ENCODE measurements at regions of chr11 and their contacts with region 1.

Region 1: GRCh38 chr11:126310228-126310991 is 6.5 kb downstream of the DCPS start:
- DNase-seq: no peak
- H3K4me3 ChIP-seq: no peak overlapping the region
- H3K27ac ChIP-seq: no peak overlapping the region
- H3K4me1 ChIP-seq: peaks cover 0 to 34% (median 3%) of the 10 kb centered on the region in 3 donors
- H3K27me3 ChIP-seq: no peaks in the 10 kb centered on the region
- CTCF ChIP-seq: peak; percentile 74 to 86 (median 81)
- POLR2A ChIP-seq: no peak

Region 2: GRCh38 chr11:126480410-126481302 is 170.2 kb after region 1 on chr11:
- intact Hi-C with region 1: loop called (anchors 5 kb)
- DNase-seq: peak; percentile 14
- H3K4me3 ChIP-seq: peak overlapping the region in 3 of 4 donors; percentile 4 to 43 (median 12)
- H3K27ac ChIP-seq: peak overlapping the region; percentile 49 to 78 (median 72)
- H3K4me1 ChIP-seq: peaks cover 8 to 17% (median 9%) of the 10 kb centered on the region in 3 donors
- H3K27me3 ChIP-seq: no peaks in the 10 kb centered on the region
- CTCF ChIP-seq: peak; percentile 83 to 98 (median 95)
- POLR2A ChIP-seq: no peak